Activated CD8-positive, alpha-beta T cell treated with anti-CD3 and anti-CD28 coated beads for 36 hours (primary cell): ENCODE measurements at regions of chr17 and their contacts with region 1.

Region 1: DNA sequence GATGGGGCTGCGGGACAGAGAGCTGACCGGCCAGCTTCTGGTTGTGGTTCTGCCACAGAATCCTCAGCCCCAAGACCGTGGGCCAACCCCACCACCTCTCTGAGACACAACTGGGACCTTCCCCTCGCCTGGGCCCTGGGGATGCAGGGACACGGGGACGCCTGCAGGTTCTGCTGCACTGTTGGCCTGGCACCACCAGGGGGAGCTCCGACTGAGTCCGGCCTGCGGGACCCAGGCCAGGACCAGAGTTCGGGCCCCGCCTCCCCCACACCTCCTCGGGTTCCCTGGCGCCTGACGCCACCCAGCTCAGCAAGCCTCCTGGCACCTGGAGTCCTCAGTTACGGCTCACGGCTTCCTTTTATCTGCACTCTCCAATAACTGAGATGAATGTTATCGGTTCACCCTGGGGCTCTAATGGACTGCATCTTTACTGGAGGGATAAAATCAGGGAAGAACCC is 27.3 kb downstream of the TBC1D16 start:
- DNase-seq: peak; percentile 86
- ATAC-seq: peak; percentile 96
- H3K4me3 Mint-ChIP-seq: no peak overlapping the region
- H3K27ac Mint-ChIP-seq: no peak overlapping the region
- H3K4me1 Mint-ChIP-seq: peaks cover 7% of the 10 kb centered on the region
- H3K27me3 Mint-ChIP-seq: no peaks in the 10 kb centered on the region
- CTCF ChIP-seq: peak; percentile 94

Region 2: DNA sequence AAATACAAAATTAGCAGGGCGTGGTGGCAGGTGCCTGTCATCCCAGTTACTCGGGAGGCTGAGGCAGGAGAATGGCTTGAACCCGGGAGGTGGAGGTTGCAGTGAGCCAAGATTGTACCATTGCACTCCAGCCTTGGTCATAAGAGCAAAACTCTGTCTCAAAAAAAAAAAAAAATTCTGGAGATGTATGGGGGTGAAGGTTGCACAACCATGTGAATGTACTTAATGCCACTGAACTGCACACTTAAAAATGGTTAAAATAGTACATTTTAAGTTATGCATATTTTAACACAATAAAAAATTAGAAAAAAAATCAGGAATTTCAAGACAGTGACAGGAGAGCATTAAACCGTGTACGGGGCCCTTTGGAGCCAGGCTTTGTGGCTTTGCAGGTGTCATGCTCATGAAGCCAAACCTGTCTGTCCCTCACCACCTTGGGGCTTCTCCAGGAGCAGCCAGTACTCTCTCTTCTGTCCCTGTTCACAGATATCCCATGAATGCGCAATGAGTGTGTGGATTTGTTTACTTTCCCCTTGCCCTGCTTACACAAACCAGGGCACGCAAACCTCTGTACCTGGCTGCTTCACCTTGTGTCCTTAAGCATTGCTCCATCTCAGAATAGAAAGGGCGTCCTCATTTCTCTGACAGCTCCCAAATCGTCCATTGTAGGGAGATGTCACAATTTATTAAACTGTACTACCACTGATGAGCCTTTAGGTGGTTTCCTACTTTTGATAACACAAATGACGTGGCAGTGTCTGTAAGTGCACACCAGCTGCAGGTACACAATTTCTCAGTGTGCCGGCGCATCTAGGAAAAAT is 111.0 kb before region 1 on chr17:
- CTCF ChIA-PET with region 1: no interaction called
- POLR2A ChIA-PET with region 1: no interaction called
- intact Hi-C with region 1: no loop called
- DNase-seq: no peak
- ATAC-seq: no peak
- H3K4me3 Mint-ChIP-seq: no peak overlapping the region
- H3K27ac Mint-ChIP-seq: no peak overlapping the region
- H3K4me1 Mint-ChIP-seq: no peaks in the 10 kb centered on the region
- H3K27me3 Mint-ChIP-seq: peaks cover 10% of the 10 kb centered on the region
- CTCF ChIP-seq: no peak

Region 3: DNA sequence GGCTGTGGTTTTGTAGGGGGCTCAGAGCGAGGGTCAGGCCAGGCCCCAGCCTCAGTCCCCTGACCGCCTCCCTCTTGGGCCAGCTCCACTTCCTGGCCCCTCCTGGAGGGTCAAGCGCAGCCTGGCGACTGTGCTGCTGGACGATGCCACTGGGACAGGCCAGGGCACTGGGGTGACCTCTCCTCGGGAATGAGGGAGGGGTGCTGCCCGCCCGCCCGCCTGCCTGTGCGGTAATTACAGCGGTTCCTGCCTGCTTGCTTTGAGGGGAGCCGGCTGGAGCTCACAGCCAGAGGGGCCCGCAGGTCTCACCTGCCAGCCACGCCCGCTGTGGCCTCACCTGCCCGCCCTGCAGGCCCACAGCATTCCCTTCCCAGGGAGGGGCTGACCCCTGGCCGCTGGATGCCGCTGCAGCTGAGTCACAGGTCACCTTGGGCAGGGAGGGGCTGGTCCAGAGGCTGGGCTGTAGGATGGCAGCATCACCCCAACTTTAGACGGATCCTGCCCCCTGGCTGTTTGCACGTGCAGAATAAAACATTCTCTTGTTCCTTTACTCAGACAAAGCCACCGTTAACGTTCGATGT is 92.5 kb before region 1 on chr17:
- CTCF ChIA-PET with region 1: no interaction called
- POLR2A ChIA-PET with region 1: no interaction called
- intact Hi-C with region 1: no loop called
- DNase-seq: peak; percentile 44
- ATAC-seq: peak; percentile 56
- H3K4me3 Mint-ChIP-seq: no peak overlapping the region
- H3K27ac Mint-ChIP-seq: no peak overlapping the region
- H3K4me1 Mint-ChIP-seq: no peaks in the 10 kb centered on the region
- H3K27me3 Mint-ChIP-seq: peaks cover 1% of the 10 kb centered on the region
- CTCF ChIP-seq: no peak

Region 4: DNA sequence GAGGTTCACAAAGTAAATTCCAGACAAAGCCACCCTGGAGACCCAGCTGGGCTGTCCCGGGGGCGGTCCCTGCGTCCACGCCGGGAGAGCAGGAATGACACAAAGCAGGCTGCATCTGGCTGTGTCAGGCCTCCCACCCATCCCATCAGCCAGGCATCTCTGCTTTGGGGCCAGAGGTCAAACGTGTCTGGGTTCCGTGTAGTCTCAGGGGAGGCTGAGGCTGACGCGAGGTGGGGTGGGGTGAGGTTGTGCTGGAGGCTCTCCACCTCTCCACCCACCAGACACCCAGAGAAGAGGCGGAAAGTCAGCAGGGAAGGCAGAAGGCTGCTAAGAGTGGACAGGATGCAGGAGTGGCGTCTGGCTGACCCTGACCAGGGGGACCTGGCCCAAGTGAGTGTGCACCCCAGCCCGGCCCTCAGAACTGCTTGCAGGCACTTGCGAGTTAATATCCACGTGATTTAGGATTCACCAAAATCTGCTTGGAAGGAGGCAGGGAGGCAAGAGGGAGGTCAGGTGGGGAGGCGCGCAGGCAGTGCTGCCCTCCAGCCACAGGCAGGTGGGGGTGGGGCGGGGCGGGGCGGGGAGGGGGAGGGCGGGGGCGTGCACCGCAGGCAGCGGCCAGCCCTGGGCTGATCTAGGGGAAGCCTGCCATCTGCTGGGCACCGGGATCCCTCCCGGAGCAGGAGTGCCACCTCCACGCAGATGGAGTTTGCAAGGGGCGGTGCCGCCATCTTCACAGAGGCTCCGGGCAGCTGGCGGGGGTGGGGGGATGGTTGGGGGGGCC is 17.1 kb before region 1 on chr17:
- CTCF ChIA-PET with region 1: interaction called, 67 read pairs
- POLR2A ChIA-PET with region 1: interaction called, 4 read pairs
- intact Hi-C with region 1: no loop called
- DNase-seq: peak; percentile 91
- ATAC-seq: peak; percentile 76
- H3K4me3 Mint-ChIP-seq: peak overlapping the region; percentile 80
- H3K27ac Mint-ChIP-seq: no peak overlapping the region
- H3K4me1 Mint-ChIP-seq: peaks cover 36% of the 10 kb centered on the region
- H3K27me3 Mint-ChIP-seq: no peaks in the 10 kb centered on the region
- CTCF ChIP-seq: peak; percentile 49

Region 5: DNA sequence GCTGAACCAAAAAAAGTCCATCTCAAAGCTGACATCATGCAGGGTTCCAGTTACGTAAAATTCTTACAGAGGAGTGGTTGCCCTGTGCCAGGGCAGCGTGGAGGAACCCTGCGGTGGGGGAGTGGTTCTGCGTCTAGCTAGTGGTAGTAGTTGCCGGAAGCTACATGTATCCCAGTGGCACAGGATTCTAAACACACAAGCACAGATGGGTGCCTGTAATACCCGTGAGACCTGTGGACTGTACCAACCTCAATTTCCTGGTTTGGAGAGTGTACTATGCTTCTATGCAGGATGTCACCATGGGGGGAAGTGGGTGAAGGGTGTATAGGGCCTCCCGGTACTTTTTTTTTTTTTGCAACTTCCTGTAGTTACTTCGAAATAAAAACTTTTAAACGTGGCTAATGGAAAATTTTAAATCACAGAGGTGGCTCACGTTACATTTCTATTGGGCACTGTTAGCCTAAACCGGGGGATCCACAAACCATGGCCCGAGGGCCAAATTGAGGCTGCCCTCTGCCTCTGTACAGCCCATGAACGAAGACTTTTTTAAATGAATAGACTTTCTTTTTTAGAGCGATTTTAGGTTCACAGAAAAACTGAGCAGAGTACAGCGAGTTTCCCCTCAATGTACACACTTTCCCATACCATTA is 11.3 kb before region 1 on chr17:
- CTCF ChIA-PET with region 1: interaction called, 67 read pairs
- POLR2A ChIA-PET with region 1: interaction called, 4 read pairs
- intact Hi-C with region 1: no loop called
- DNase-seq: peak; percentile 89
- ATAC-seq: peak; percentile 92
- H3K4me3 Mint-ChIP-seq: peak overlapping the region; percentile 65
- H3K27ac Mint-ChIP-seq: peak overlapping the region; percentile 94
- H3K4me1 Mint-ChIP-seq: peaks cover 48% of the 10 kb centered on the region
- H3K27me3 Mint-ChIP-seq: no peaks in the 10 kb centered on the region
- CTCF ChIP-seq: no peak

Region 6: GRCh38 chr17:80029258-80029974 is 21.0 kb after region 1 on chr17:
- CTCF ChIA-PET with region 1: interaction called, 25 read pairs
- POLR2A ChIA-PET with region 1: interaction called, 7 read pairs
- intact Hi-C with region 1: no loop called
- DNase-seq: no peak
- ATAC-seq: no peak
- H3K4me3 Mint-ChIP-seq: no peak overlapping the region
- H3K27ac Mint-ChIP-seq: no peak overlapping the region
- H3K4me1 Mint-ChIP-seq: no peaks in the 10 kb centered on the region
- H3K27me3 Mint-ChIP-seq: peaks cover 1% of the 10 kb centered on the region
- CTCF ChIP-seq: no peak

Region 7: GRCh38 chr17:80034791-80035692 is 26.6 kb after region 1 on chr17:
- CTCF ChIA-PET with region 1: interaction called, 25 read pairs
- POLR2A ChIA-PET with region 1: interaction called, 7 read pairs
- intact Hi-C with region 1: no loop called
- DNase-seq: peak; percentile 66
- ATAC-seq: peak; percentile 37
- H3K4me3 Mint-ChIP-seq: peak overlapping the region; percentile 83
- H3K27ac Mint-ChIP-seq: peak overlapping the region; percentile 51
- H3K4me1 Mint-ChIP-seq: peaks cover 10% of the 10 kb centered on the region
- H3K27me3 Mint-ChIP-seq: peaks cover 8% of the 10 kb centered on the region
- CTCF ChIP-seq: no peak

Region 8: GRCh38 chr17:80082403-80083135 is 74.2 kb after region 1 on chr17:
- CTCF ChIA-PET with region 1: interaction called, 11 read pairs
- POLR2A ChIA-PET with region 1: no interaction called
- intact Hi-C with region 1: no loop called
- DNase-seq: peak; percentile 79
- ATAC-seq: peak; percentile 91
- H3K4me3 Mint-ChIP-seq: no peak overlapping the region
- H3K27ac Mint-ChIP-seq: peak overlapping the region; percentile 52
- H3K4me1 Mint-ChIP-seq: peaks cover 3% of the 10 kb centered on the region
- H3K27me3 Mint-ChIP-seq: no peaks in the 10 kb centered on the region
- CTCF ChIP-seq: peak; percentile 88

Region 9: DNA sequence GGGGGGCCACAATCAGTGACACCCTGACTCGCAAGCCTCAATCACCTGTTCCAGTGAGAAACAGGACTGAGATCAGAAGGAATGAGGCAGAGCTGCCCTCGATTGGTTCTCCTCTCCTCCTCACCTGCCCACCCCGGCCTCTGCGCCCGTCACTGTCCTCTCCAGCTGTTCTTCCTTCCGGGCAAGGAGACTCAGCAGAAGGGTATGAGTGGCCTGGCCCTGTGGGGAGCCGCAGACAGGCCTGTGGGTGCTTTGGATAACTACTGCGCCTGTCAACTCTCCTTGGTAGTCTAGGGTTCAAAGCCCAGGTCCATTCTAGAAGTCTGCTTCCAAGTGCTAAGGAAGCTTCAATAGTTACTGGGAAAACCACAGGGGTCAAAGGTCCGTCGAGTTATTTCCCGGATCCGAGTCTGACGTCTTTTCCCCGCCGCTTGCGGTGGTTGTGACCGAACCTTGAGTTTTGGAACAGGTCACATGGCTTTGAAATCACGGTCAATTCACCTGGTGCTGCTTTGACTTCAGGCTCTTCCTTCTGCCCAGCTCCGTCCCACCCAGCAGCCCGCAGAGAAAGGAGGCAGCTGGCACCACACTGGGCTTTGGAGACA is 169.7 kb after region 1 on chr17:
- CTCF ChIA-PET with region 1: no interaction called
- POLR2A ChIA-PET with region 1: no interaction called
- intact Hi-C with region 1: no loop called
- DNase-seq: no peak
- ATAC-seq: no peak
- H3K4me3 Mint-ChIP-seq: no peak overlapping the region
- H3K27ac Mint-ChIP-seq: no peak overlapping the region
- H3K4me1 Mint-ChIP-seq: no peaks in the 10 kb centered on the region
- H3K27me3 Mint-ChIP-seq: no peaks in the 10 kb centered on the region
- CTCF ChIP-seq: no peak